Dendritic cell treated with granulocyte-macrophage colony-stimulating factor and Interleukin-4, amounts not matched to agents 40 ng/mL and 50 ng/mL, for 4 days (primary cell): ENCODE measurements at regions of chr22 and their contacts with region 1.

Region 1: DNA sequence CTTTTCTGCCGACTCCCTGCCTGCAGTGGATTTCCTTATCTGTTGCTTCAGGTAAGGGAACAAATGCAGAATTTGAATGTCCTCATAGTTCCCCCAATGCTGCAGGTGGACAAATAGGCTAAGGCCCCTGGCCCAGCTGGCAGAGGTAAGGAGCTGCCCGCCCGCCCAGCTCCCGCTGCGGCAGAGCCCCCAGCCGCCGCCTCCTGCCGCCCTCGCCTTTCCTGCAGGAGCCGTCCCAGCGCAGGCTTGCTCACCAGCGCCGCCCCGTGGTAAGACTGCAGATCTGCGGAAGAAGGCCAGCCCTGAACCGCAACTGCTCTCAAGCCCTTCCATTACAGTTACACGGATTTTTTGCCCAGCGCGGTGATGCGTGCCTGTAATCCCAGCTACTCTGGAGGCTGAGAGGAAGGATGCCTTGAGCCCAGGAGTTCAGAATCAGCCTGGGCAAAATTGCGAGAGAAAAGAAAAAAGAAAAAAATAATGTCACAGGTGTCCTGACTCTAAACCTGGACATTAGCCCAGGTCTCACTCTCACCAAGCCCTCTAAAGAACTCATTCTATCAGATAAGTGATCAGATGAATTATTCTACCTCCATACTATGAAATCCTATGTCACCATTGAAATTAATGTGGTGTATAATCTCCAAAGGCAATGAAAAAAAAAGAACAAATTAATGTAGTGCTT is 51.2 kb upstream of the EMID1 start:
- H3K4me3 Mint-ChIP-seq: peak overlapping the region; percentile 13
- H3K27ac Mint-ChIP-seq: no peak overlapping the region
- H3K4me1 Mint-ChIP-seq: peaks cover 44% of the 10 kb centered on the region
- H3K27me3 Mint-ChIP-seq: peaks cover 10% of the 10 kb centered on the region

Region 2: DNA sequence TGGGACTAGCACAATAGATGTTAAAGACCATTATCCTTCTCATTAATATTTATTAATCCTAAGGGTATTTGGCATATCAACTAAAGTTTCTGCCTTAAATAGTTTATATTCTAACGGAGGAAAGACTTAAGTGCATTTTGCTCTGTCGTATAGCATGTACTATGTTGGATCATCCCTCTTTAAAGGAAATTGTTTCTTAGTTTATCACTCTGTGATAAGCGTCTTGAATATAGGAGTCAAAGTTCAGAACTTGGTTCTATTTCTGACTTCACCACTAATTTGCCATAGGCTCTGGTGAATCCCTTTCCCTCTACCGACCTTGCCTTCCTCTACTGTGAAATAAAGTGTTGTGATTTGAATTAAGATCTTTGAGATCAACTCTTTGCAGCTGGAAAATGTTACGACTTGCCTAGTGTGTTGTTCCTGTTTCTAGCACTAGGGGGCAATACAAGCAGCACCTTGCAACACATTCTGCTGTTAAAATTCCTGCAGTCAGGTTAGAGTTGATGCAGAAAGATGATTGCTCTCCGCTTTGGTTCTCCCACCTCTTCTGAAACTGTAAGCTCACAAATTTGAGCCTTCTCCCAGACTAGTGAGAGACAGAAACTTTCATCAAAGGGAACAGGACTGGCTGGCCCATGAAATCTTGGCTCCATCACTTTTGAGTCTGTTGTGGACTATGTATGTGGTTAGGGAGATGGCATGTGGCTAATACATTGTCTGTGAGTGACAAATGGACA is 299.0 kb before region 1 on chr22:
- intact Hi-C with region 1: loop called (anchors 10 kb)
- H3K4me3 Mint-ChIP-seq: no peak overlapping the region
- H3K27ac Mint-ChIP-seq: no peak overlapping the region
- H3K4me1 Mint-ChIP-seq: no peaks in the 10 kb centered on the region
- H3K27me3 Mint-ChIP-seq: peaks cover 5% of the 10 kb centered on the region

Region 3: DNA sequence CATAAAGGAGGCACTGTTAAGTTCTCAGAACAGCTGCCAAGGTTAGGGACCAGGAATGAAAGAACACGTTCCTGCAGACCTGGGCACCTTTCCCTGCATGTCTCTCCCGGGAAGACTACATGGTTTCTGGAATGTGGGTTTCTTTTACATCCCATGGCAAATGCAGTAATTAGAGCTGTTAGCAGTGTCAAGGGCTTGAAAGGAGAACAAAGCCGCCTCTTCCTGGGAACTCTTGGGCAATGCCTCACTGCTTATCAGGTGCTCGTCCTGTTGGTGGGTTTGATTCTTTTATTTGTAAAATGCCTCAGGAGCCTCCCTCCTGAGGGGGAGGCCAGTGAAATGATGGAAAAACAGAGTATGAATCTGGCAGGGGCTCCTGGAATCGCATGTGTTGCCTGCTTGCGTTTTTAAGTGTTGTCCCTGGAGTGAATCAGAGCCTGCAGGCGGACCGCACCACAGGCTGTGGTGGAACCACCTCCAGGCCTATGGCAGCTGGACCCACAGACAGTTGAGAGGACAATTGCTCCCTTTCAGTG is 92.2 kb before region 1 on chr22:
- intact Hi-C with region 1: no loop called
- H3K4me3 Mint-ChIP-seq: no peak overlapping the region
- H3K27ac Mint-ChIP-seq: no peak overlapping the region
- H3K4me1 Mint-ChIP-seq: peaks cover 23% of the 10 kb centered on the region
- H3K27me3 Mint-ChIP-seq: peaks cover 61% of the 10 kb centered on the region

Region 4: DNA sequence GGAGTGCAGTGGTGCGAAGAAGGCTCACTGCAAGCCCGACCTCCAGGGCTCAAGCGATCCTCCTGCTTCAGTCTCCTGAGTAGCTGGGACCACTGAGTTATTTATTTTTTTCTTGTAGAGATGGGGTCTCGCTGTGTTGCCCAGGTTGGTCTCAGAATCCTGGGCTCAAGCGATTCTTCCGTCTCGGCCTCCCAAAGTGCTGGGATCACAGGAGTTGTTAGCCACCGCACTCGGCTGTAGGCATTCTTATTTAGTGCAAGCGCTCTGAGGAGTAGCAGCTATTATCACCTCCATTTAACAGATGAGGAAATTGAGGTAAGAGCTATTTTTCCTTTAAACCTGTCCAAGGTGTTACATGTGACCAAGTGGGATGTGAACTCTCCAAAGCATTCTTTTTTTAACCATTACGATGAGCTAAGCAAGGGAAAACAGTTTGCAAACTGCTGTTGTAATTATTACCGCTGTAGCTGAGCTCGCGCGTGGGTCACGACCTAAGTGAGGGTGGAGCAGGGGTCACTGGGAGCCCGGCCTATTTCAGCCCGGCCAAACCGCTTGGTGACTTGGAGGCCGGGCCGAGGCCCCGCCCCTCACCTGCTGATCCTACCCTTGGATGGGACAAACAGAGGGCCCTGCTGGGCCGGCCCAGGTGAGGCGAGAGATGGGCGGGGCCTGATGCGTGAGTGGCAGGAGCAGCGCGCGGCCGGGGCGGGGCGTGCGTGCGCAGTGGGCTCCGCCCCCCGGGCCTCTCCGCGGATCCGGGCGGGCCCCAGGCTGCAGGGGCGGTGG is 82.1 kb before region 1 on chr22:
- intact Hi-C with region 1: loop called (anchors 5 kb)
- H3K4me3 Mint-ChIP-seq: peak overlapping the region; percentile 76
- H3K27ac Mint-ChIP-seq: no peak overlapping the region
- H3K4me1 Mint-ChIP-seq: peaks cover 30% of the 10 kb centered on the region
- H3K27me3 Mint-ChIP-seq: peaks cover 82% of the 10 kb centered on the region

Region 5: DNA sequence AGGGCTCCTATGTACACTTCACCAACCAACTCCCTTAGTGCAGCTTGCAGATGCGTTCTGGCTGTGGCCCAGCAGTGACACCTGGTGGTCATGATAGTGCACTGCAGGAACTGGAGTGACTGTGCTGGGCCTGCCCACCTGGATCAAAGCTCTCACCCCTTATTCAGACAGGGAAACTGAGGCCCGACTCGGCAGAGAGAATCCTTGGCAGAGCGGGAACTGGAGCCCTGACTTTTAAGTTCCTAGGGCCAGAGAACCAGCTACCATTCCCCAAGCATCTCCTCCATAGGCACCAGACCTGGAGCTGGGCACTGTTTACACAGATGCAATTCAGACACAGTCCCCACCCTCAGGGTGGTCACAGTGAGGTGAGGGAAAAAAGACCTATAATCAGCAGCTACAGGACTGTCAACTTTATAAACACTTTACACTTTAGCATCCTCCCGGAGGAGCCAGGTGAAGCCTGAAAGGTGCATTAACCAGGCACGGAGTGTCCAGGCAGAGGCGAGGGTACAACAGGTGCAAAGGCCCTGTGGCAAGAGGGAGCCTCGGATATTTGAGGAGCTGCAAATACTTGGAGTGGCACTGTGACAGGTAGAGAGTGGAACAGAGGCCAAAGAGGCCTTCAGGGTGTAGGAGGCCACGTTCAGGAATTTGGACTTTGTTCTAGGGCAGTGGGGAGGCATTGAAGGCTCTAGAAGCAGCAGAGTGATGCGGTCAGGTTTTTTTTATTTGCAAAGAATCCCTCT is 91.3 kb after region 1 on chr22:
- intact Hi-C with region 1: loop called (anchors 10 kb)
- H3K4me3 Mint-ChIP-seq: no peak overlapping the region
- H3K27ac Mint-ChIP-seq: no peak overlapping the region
- H3K4me1 Mint-ChIP-seq: no peaks in the 10 kb centered on the region
- H3K27me3 Mint-ChIP-seq: no peaks in the 10 kb centered on the region

Region 6: GRCh38 chr22:29310863-29311339 is 156.4 kb after region 1 on chr22:
- intact Hi-C with region 1: no loop called
- H3K4me3 Mint-ChIP-seq: peak overlapping the region; percentile 26
- H3K27ac Mint-ChIP-seq: peak overlapping the region; percentile 82
- H3K4me1 Mint-ChIP-seq: peaks cover 81% of the 10 kb centered on the region
- H3K27me3 Mint-ChIP-seq: peaks cover 27% of the 10 kb centered on the region